ENCODE measurements at regions of chr22 and their contacts with region 1.

Region 1: DNA sequence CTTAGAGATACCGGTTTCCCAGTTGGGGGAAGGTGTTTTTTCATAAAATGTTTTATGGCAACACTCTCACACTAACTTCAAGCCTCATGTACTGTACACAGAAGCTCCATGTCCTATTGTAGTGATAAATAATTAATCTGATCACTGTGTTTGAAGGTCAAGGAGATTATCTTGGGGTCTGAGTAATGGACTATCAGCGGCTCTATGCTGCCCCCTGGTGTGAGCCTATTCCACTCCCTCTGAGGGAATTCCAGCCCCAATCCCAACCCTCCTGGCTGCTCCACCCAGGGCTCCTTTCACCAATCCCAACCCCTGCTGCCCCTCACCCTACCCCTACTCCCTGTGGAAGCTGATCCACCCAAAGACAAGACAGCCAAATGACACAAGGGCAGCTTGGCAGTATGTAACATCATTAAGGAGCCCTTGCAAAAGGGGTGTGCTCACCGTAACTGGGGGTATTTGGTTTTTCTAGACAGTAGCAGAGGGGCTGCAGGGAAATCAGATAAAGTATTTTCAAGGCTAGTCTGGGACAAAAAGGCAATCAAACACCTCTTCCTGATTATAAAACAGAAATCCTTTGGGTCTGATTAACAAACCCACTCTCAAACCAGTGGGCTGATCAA is 22.3 kb downstream of the HPS4 start:
- DNase-seq: peak; percentile 42
- H3K4me3 ChIP-seq: no peak overlapping the region
- H3K27ac ChIP-seq: no peak overlapping the region
- H3K4me1 ChIP-seq: peaks cover 10% of the 10 kb centered on the region
- H3K27me3 ChIP-seq: no peaks in the 10 kb centered on the region
- CTCF ChIP-seq: peak; percentile 81

Region 2: GRCh38 chr22:26295563-26296126 is 165.7 kb before region 1 on chr22:
- intact Hi-C with region 1: no loop called
- DNase-seq: no peak
- H3K4me3 ChIP-seq: no peak overlapping the region
- H3K27ac ChIP-seq: no peak overlapping the region
- H3K4me1 ChIP-seq: no peaks in the 10 kb centered on the region
- H3K27me3 ChIP-seq: peaks cover 57% of the 10 kb centered on the region
- CTCF ChIP-seq: no peak

Region 3: GRCh38 chr22:26364066-26365015 is 97.0 kb before region 1 on chr22:
- intact Hi-C with region 1: loop called (anchors 10 kb)
- DNase-seq: peak; percentile 26
- H3K4me3 ChIP-seq: no peak overlapping the region
- H3K27ac ChIP-seq: no peak overlapping the region
- H3K4me1 ChIP-seq: peaks cover 8% of the 10 kb centered on the region
- H3K27me3 ChIP-seq: peaks cover 60% of the 10 kb centered on the region
- CTCF ChIP-seq: peak; percentile 71

Measured in left ventricle myocardium inferior (tissue), 1 donor.